CD8-positive, alpha-beta memory T cell (primary cell): ENCODE measurements at regions of chr1 and their contacts with region 1.

Region 1: DNA sequence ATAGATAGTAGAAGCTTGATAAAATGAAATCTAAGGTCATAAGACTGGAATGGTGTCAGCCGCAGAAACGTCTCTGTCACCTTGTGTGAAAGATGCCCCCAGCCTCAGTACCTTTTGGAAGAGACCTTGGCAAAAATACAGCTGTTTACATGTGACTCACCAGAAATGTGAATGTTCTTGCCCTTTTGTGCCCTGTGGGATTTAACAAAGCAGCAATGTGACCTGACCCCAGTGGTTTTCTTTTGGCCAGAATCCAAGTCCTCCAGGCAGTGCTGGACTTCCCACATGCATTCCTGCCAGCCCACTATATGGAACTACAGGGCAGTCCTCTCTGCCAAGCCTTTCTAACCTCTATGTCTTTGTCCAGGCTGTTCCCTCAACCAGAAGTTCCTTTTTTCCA is 27.2 kb upstream of the LRRC8C start:
- DNase-seq: no peak
- H3K4me3 ChIP-seq: no peak overlapping the region
- H3K4me3 Mint-ChIP-seq: peak overlapping the region in 5 of 7 donors; percentile 10 to 90 (median 32)
- H3K27ac ChIP-seq: no peak overlapping the region
- H3K27ac Mint-ChIP-seq: peak overlapping the region; percentile 77 to 99 (median 97)
- H3K4me1 ChIP-seq: peaks cover 90% of the 10 kb centered on the region
- H3K4me1 Mint-ChIP-seq: peaks cover 82 to 98% (median 94%) of the 10 kb centered on the region in 3 donors
- H3K27me3 ChIP-seq: no peaks in the 10 kb centered on the region
- H3K27me3 Mint-ChIP-seq: peaks cover 0 to 3% of the 10 kb centered on the region in 2 donors

Region 2: GRCh38 chr1:89581859-89582258 is 23.8 kb before region 1 on chr1:
- CTCF ChIA-PET with region 1: interaction called, 14 read pairs
- POLR2A ChIA-PET with region 1: no interaction called
- DNase-seq: no peak
- H3K4me3 ChIP-seq: no peak overlapping the region
- H3K4me3 Mint-ChIP-seq: no peak overlapping the region
- H3K27ac ChIP-seq: no peak overlapping the region
- H3K27ac Mint-ChIP-seq: peak overlapping the region in 2 of 8 donors; percentile 61 to 83
- H3K4me1 ChIP-seq: no peaks in the 10 kb centered on the region
- H3K4me1 Mint-ChIP-seq: peaks cover 6 to 20% (median 9%) of the 10 kb centered on the region in 3 donors
- H3K27me3 ChIP-seq: no peaks in the 10 kb centered on the region
- H3K27me3 Mint-ChIP-seq: no peaks in the 10 kb centered on the region

Region 3: DNA sequence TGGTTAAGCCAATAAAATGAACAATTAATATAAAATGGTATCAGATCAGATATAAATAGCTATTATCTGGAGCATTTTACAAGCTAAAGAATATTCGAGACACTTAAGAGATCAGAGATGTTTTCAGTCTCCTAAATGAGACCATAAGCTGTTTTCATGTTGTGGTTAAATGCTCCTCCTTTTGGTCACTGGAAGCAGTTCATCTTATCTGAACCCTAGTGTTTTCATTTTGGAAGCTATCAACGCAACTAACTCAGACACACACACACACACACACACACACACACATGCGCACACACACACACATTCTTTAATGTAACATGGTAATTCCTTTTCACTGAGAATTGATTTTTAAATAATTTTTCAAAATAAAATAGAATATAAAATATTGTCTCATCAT is 17.2 kb after region 1 on chr1:
- CTCF ChIA-PET with region 1: interaction called, 403 read pairs
- POLR2A ChIA-PET with region 1: interaction called, 19 read pairs
- DNase-seq: peak in 1 of 5 donors; percentile 32
- H3K4me3 ChIP-seq: no peak overlapping the region
- H3K4me3 Mint-ChIP-seq: peak overlapping the region in 1 of 7 donors; percentile 14
- H3K27ac ChIP-seq: no peak overlapping the region
- H3K27ac Mint-ChIP-seq: peak overlapping the region in 1 of 8 donors; percentile 76
- H3K4me1 ChIP-seq: peaks cover 32% of the 10 kb centered on the region
- H3K4me1 Mint-ChIP-seq: peaks cover 35 to 75% (median 73%) of the 10 kb centered on the region in 3 donors
- H3K27me3 ChIP-seq: no peaks in the 10 kb centered on the region
- H3K27me3 Mint-ChIP-seq: no peaks in the 10 kb centered on the region

Region 4: GRCh38 chr1:89649783-89650182 is 44.1 kb after region 1 on chr1:
- CTCF ChIA-PET with region 1: no interaction called
- POLR2A ChIA-PET with region 1: interaction called, 10 read pairs
- DNase-seq: no peak
- H3K4me3 ChIP-seq: no peak overlapping the region
- H3K4me3 Mint-ChIP-seq: peak overlapping the region in 5 of 7 donors; percentile 10 to 41 (median 32)
- H3K27ac ChIP-seq: no peak overlapping the region
- H3K27ac Mint-ChIP-seq: peak overlapping the region; percentile 5 to 81 (median 67)
- H3K4me1 ChIP-seq: peaks cover 54% of the 10 kb centered on the region
- H3K4me1 Mint-ChIP-seq: peaks cover 66 to 85% (median 77%) of the 10 kb centered on the region in 3 donors
- H3K27me3 ChIP-seq: no peaks in the 10 kb centered on the region
- H3K27me3 Mint-ChIP-seq: no peaks in the 10 kb centered on the region

Region 5: DNA sequence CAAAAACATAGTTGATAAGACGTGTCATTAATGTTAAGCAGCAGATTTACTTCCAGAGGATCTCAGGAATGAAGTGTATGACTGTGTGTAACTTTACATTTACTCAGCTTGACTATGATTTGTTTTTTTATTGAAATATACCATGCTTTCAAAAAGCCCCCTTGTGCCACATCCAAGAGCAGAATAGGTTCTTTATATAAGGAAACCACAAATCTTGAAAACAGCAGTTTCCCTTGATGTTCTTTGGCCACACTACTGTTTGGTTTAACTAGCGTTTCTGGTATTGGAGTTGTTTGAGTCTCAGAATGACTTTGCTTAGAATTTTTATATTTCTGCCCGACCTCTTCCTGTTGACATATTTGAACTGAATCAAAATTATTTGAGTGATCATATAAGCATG is 52.2 kb after region 1 on chr1:
- CTCF ChIA-PET with region 1: interaction called, 11 read pairs
- POLR2A ChIA-PET with region 1: interaction called, 3 read pairs
- DNase-seq: peak in 3 of 5 donors; percentile 52 to 80 (median 74)
- H3K4me3 ChIP-seq: no peak overlapping the region
- H3K4me3 Mint-ChIP-seq: peak overlapping the region; percentile 40 to 85 (median 52)
- H3K27ac ChIP-seq: no peak overlapping the region
- H3K27ac Mint-ChIP-seq: peak overlapping the region; percentile 78 to 97 (median 88)
- H3K4me1 ChIP-seq: peaks cover 75% of the 10 kb centered on the region
- H3K4me1 Mint-ChIP-seq: peaks cover 91 to 100% (median 99%) of the 10 kb centered on the region in 3 donors
- H3K27me3 ChIP-seq: no peaks in the 10 kb centered on the region
- H3K27me3 Mint-ChIP-seq: no peaks in the 10 kb centered on the region

Region 6: GRCh38 chr1:89780721-89781120 is 175.0 kb after region 1 on chr1:
- CTCF ChIA-PET with region 1: no interaction called
- POLR2A ChIA-PET with region 1: no interaction called
- DNase-seq: peak in 1 of 5 donors; percentile 37
- H3K4me3 ChIP-seq: no peak overlapping the region
- H3K4me3 Mint-ChIP-seq: peak overlapping the region in 2 of 7 donors; percentile 4 to 32
- H3K27ac ChIP-seq: no peak overlapping the region
- H3K27ac Mint-ChIP-seq: peak overlapping the region in 2 of 8 donors; percentile 61 to 74
- H3K4me1 ChIP-seq: peaks cover 13% of the 10 kb centered on the region
- H3K4me1 Mint-ChIP-seq: peaks cover 25 to 27% (median 27%) of the 10 kb centered on the region in 3 donors
- H3K27me3 ChIP-seq: no peaks in the 10 kb centered on the region
- H3K27me3 Mint-ChIP-seq: no peaks in the 10 kb centered on the region

Region 7: DNA sequence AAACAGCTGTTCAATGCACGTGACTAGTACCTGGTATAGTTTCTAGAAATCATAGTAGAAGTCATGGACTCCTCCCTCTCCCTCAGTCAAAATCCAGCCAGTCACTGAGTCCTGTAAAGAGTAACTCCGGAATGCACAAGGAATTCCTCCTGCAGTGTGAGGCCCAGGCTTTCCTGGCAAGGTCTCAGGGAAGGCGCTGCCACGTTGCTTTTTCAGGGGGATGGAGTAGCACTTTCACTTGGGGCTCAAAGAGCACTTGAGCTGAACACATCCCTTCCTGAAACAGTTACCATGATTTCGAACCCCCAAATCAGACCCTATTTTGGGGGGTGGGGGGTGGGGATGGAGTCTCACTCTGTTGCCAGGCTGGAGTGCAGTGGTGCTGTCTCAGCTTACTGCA is 188.7 kb after region 1 on chr1:
- CTCF ChIA-PET with region 1: no interaction called
- POLR2A ChIA-PET with region 1: no interaction called
- DNase-seq: no peak
- H3K4me3 ChIP-seq: no peak overlapping the region
- H3K4me3 Mint-ChIP-seq: no peak overlapping the region
- H3K27ac ChIP-seq: no peak overlapping the region
- H3K27ac Mint-ChIP-seq: no peak overlapping the region
- H3K4me1 ChIP-seq: no peaks in the 10 kb centered on the region
- H3K4me1 Mint-ChIP-seq: no peaks in the 10 kb centered on the region
- H3K27me3 ChIP-seq: no peaks in the 10 kb centered on the region
- H3K27me3 Mint-ChIP-seq: no peaks in the 10 kb centered on the region